ENCODE measurements at regions of chr6 and their contacts with region 1.

Region 1: GRCh38 chr6:84227434-84228197 is at the start of gene CEP162:
- DNase-seq: peak; percentile 76
- CTCF ChIP-seq: peak; percentile 59

Region 2: DNA sequence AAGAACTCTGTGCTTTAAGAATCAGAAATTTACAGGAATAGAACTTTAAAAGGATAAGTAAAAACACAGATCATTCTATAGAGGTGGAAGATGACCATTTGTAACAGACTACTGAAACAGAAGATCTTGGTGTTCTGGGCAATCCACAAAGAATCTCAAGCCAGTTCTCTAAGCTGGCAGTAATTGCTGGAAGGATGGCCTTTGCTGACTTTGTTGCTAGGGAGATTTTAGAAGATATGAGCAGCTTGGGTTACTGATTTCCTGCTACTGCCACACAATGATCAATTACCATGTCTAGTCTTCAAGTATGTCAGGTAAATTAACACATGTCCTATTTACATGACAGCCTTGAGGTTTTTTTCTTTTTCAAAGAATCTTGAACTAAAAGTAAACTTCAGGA is 549.8 kb before region 1 on chr6:
- in situ Hi-C with region 1: no loop called
- DNase-seq: no peak
- CTCF ChIP-seq: no peak

Region 3: DNA sequence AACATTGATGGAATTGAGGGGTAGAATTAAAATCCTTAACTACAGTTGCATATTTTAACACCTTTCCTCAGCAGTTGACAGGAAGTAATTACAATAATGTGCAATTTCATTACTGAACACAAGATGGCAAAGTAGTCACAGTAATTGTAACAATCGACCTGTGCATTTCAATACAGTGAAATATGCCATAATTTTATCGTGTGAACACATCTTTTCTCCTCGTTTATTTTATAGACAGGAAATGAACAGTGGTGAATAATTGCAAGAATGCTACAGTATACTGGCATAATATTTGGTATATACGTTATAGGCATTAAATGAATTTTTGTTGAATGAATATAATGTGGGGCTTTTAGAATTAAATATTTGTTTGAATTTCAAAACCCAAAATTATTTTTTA is 343.1 kb before region 1 on chr6:
- in situ Hi-C with region 1: loop called (anchors 10 kb)
- DNase-seq: peak; percentile 43
- CTCF ChIP-seq: peak; percentile 70

Region 4: GRCh38 chr6:84546427-84546914 is 318.9 kb after region 1 on chr6:
- in situ Hi-C with region 1: no loop called
- DNase-seq: no peak
- CTCF ChIP-seq: no peak

Measured in GM13977 (cell line).